Panc1 (cell line): ENCODE measurements at regions of chr15 and their contacts with region 1.

Region 1: DNA sequence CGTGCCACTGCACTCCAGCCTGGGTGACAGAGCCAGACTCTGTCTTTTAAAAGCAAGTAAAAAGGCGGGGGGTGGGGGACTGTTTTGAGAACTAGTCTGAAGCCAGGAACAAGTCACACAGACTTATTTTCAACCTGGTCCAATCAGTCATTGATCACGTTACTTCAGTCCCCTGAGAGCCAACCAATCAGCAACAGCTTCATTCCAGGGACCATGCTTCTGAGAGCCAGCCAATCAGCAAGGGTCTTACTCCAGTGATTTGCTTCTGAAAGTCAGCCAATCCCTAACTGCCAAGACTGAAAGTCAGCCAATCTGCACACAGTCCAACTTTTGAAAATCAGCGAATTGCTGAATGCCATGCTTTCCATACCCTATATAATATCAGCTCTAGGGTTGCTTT is 48.6 kb upstream of the C15orf39 start:
- DNase-seq: no peak
- ATAC-seq: no peak
- H3K4me3 ChIP-seq: no peak overlapping the region
- H3K27ac ChIP-seq: no peak overlapping the region
- H3K4me1 ChIP-seq: no peaks in the 10 kb centered on the region
- H3K27me3 ChIP-seq: no peaks in the 10 kb centered on the region
- CTCF ChIP-seq: no peak

Region 2: DNA sequence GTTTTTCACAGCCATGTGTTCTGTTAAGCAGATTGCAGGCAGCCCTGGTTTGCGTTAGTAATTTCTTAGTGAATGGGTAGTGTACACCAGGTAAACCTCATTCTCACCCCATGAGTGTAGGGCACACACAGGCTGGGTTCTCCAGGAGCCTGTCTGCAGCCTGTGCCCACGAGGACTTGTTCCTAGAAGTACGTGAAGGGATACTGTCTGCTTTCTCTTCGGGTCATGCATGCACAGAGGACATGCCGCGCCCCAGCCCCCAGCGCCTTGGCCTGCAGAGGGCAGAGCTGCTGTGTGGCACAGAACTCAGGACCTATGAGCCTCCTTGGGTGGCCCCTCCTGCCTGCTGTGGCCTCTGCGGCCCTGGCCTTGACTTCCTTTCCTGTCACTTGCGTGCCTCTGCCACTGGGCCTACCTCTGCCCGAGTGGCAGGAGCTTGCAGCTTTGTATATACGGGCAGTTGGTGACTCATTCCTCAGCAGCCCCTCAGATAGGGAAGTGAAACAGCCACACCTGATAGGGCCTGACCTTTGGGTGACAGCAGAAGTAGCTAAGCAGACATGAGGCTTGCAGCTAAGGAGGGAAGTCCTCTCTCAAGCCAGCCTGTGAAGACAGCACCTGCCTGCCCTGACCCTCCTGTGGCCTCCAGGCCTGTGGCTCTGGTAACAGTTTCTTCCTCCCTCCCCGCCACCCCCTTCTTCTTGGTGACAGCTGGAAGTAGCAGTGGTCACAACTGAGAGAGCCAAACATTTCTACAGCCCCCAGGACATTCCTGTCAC is 110.2 kb before region 1 on chr15:
- CTCF ChIA-PET with region 1: interaction called, 15 read pairs
- POLR2A ChIA-PET with region 1: no interaction called
- in situ Hi-C with region 1: no loop called
- intact Hi-C with region 1: no loop called
- DNase-seq: no peak
- ATAC-seq: peak; percentile 88
- H3K4me3 ChIP-seq: no peak overlapping the region
- H3K27ac ChIP-seq: peak overlapping the region; percentile 44; the same call in 1 of the 2 replicates
- H3K4me1 ChIP-seq: peaks cover 18% of the 10 kb centered on the region
- H3K27me3 ChIP-seq: no peaks in the 10 kb centered on the region
- CTCF ChIP-seq: no peak; the same call in 1 of the 2 replicates